ENCODE measurements at regions of chr11 and their contacts with region 1.

Region 1: GRCh38 chr11:76371170-76371569 is 9.8 kb downstream of the THAP12 start:
- DNase-seq: peak in 1 of 2 donors; percentile 60
- H3K4me3 ChIP-seq: no peak overlapping the region
- H3K27ac ChIP-seq: peak overlapping the region in 1 of 5 donors; percentile 24
- H3K4me1 ChIP-seq: peaks cover 29 to 84% (median 60%) of the 10 kb centered on the region in 4 donors
- H3K27me3 ChIP-seq: no peaks in the 10 kb centered on the region
- CTCF ChIP-seq: no peak
- EP300 ChIP-seq: no peak
- POLR2A ChIP-seq: no peak

Region 2: GRCh38 chr11:76444384-76445123 is 73.4 kb after region 1 on chr11 and contains the start of gene EMSY:
- intact Hi-C with region 1: loop called (anchors 5 kb)
- DNase-seq: peak; percentile 96 to 100
- H3K4me3 ChIP-seq: peak within 1 kb of the TSS; percentile 88 to 98 (median 96)
- H3K27ac ChIP-seq: peak within 1 kb of the TSS; percentile 84 to 93 (median 91)
- H3K4me1 ChIP-seq: peaks cover 9 to 29% (median 25%) of the 10 kb centered on the region in 4 donors
- H3K27me3 ChIP-seq: no peaks in the 10 kb centered on the region
- CTCF ChIP-seq: peak in 1 of 7 experiments; percentile 14
- EP300 ChIP-seq: no peak
- POLR2A ChIP-seq: peak in 2 of 4 donors; percentile 91 to 98
- total RNA-seq, gene EMSY: 10.1 to 185 (median 32.2) TPM

Region 3: GRCh38 chr11:77117492-77117891 is 746.3 kb after region 1 on chr11:
- intact Hi-C with region 1: no loop called
- DNase-seq: no peak
- H3K4me3 ChIP-seq: no peak overlapping the region
- H3K27ac ChIP-seq: no peak overlapping the region
- H3K4me1 ChIP-seq: peaks cover 0 to 8% (median 0%) of the 10 kb centered on the region in 4 donors
- H3K27me3 ChIP-seq: no peaks in the 10 kb centered on the region
- CTCF ChIP-seq: no peak
- EP300 ChIP-seq: no peak
- POLR2A ChIP-seq: no peak

Measured in stomach (tissue), 19 donors.